ENCODE measurements at regions of chr15 and their contacts with region 1.

Region 1: DNA sequence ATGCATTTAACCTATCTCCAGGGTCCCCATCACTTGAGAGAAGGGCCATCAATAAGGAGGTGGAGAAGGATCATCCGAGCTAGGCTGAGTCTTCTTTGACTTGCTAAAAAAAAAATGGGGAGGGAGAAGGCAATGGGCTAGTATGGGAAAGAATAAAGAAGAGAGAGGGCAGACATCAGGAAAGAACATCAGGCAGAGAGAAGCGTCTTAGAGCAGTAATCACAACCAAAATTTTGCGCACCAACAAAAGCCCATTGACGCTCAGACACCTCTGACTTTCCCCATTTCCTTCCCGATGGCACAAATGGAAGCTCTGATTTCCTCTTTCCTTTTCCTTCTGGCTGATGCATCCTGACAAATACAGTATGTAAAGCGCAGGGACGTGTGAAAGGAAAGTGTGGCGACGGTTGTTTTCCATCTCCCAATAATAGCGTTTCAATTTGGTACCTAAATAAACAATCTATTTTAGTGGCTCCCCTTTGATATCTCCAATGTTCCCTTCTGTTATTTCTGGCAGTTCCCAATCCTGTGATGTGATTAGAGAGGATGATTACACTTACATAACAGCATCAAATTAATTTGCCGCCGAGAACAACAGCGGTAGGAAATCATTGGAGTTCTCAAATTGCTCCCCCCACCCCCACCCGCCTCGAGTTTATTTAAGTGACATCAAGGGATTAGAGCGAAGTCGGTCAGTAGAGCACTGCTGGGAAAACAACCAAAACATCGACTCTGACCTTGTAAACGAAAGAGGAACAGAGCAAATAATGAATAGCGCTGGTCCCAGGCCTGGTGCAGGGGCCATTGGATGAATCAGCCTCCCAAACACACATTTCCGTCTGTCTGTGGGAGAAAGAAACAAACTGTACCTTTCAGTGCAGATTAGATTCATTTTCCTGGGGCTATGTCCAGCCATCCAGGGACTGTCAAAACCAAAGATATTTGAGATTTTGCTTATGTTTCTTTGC is 273.3 kb upstream of the ICE2 start:
- DNase-seq: peak; percentile 77 to 93 (median 88)
- H3K4me3 ChIP-seq: peak overlapping the region in 2 of 4 donors; percentile 6 to 37
- H3K27ac ChIP-seq: peak overlapping the region; percentile 2 to 87 (median 77)
- H3K4me1 ChIP-seq: peaks cover 12 to 24% of the 10 kb centered on the region in 2 donors
- H3K27me3 ChIP-seq: no peaks in the 10 kb centered on the region
- CTCF ChIP-seq: no peak
- POLR2A ChIP-seq: peak in 1 of 2 donors; percentile 32

Region 2: DNA sequence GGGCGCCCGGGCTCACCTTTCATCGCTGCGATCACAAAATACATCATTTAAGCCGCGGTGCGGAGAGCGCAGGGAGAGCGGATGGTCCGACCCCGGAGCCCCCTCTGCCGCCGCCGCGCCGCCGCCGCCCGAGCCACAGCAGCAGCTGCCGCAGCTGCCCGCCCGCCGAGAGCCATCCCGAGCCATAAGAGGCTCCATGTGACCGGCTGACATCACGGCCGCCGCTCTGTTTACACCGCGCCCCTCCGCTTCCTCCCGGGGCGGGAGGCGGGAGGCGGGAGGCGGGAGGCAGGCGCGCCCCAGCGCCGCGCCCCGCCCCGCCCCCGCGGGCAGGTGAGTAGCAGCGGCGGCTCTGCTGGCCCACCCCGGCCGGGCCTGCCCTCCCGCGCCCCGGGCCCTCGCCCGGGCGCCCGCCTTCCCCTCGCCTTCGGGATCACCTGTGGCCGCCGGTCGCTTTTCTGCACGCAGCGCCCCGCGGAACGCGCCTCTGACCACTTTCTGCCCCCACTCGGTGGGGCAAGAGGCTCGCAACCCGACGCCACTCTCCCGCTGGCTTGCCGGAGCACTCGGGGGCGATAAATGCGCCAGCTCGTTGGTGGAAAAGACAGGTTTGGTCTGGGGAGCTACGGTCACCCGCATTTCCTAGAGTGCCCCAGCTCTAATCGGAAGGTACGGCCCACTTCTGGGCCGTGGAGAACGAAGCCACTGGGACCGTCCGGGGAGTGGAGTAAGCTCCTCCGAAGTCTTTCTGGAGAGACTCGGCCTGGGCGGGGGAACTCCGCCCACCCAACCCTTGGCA is 159.7 kb before region 1 on chr15:
- intact Hi-C with region 1: loop called in 1 of 2 experiments (anchors 10 kb)
- DNase-seq: peak; percentile 89 to 94 (median 92)
- H3K4me3 ChIP-seq: peak overlapping the region in 3 of 4 donors; percentile 67 to 99 (median 97)
- H3K27ac ChIP-seq: peak overlapping the region; percentile 85 to 99 (median 97)
- H3K4me1 ChIP-seq: peaks cover 15 to 23% of the 10 kb centered on the region in 2 donors
- H3K27me3 ChIP-seq: no peaks in the 10 kb centered on the region
- CTCF ChIP-seq: peak in 4 of 6 experiments; percentile 17 to 37 (median 24)
- POLR2A ChIP-seq: peak; percentile 87 to 96

Region 3: GRCh38 chr15:60649845-60650548 is 102.3 kb before region 1 on chr15:
- intact Hi-C with region 1: no loop called
- DNase-seq: no peak
- H3K4me3 ChIP-seq: no peak overlapping the region
- H3K27ac ChIP-seq: no peak overlapping the region
- H3K4me1 ChIP-seq: peaks cover 5 to 23% of the 10 kb centered on the region in 2 donors
- H3K27me3 ChIP-seq: no peaks in the 10 kb centered on the region
- CTCF ChIP-seq: no peak
- POLR2A ChIP-seq: no peak

Region 4: DNA sequence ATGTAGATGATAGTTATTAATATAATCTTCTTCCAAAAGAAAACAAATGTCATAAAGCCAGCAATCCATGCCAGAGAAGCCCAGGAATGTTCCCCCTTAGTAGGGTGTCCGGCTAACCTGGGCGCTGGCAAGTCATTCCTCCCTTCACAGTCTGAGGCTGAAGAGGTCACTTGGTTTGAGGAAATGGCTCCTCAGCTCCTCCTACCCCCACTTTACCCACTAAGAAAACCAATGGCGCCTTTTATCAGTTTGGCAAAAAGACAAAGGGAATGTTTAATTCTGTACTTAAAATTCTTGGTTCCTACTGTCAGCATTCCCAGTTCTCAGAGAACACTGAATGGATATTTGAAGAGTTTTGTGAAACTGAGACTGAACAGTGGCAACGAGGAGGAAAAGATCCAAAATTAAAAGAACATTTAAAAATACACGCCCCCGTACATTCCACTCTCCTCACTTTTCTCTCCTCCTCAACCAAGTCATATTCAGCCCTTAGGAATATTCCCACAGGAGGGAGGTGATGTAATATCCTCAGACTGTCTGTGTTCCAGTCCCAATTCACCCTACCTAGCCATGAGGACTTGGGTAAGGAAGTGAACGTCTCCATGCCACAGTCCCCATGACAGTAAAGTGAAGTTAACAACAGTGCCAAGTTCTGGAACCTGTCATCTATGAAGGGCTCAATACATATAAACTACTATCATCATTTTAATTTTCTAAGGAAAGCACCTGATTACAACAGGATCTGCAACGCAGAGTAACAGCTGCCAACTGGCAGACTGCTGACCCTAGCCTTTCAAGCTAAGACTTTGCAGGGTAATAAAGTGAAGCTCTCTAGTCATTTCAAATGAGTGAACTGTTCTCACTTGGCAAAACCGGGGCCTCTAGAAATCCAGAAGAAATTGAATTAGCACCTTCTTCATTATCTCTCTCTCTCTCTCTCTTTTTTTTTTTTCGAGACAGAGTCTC is 38.9 kb before region 1 on chr15:
- intact Hi-C with region 1: no loop called
- DNase-seq: no peak
- H3K4me3 ChIP-seq: no peak overlapping the region
- H3K27ac ChIP-seq: peak overlapping the region in 2 of 5 donors; percentile 40 to 62
- H3K4me1 ChIP-seq: peaks cover 5 to 13% of the 10 kb centered on the region in 2 donors
- H3K27me3 ChIP-seq: no peaks in the 10 kb centered on the region
- CTCF ChIP-seq: no peak
- POLR2A ChIP-seq: no peak

Region 5: DNA sequence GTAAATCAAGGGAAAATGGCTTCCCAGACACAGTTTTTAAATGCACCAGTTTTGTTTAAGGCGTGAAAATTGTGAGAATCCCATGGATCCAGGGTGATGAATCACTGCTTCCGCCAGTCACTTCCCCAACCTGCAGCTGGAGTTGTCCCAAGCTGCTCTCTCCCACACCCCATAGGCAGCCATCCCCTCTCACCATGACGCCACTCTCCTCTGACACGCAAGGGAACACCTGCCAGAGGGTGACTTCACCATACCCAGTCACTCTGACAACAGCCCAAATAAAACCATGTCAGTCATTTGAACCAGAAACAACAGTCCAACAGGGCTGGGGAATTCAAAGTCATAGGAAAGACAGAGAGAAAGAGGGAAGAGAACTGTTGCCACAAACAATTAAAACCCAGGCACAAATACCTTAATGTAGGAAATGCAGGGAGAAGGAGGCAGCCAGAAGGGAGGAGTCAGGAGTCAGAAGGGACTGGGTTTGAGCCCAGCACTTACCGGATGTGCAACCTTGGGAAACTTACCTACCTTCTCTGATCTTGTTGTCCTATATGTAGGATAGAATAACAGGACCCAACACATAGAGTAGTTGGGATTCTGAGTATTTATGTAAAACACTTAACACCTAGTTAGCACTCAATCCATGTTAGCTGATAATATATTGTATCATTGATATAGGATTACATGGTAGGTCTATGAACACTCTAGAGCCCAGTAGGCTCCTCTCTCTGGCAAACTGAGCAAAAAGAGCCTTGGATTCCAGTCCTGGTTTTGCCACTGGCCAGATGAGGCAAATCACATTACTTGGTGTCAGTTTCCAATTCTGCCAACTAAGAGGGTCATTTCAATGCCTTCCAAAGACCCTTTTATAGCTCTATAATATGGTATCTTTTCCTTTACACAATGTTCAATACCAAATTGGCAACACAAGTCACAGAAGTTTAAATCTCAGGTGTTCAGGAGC is 53.0 kb after region 1 on chr15:
- intact Hi-C with region 1: no loop called
- DNase-seq: peak in 1 of 7 donors; percentile 30
- H3K4me3 ChIP-seq: no peak overlapping the region
- H3K27ac ChIP-seq: no peak overlapping the region
- H3K4me1 ChIP-seq: peaks cover 0 to 9% of the 10 kb centered on the region in 2 donors
- H3K27me3 ChIP-seq: no peaks in the 10 kb centered on the region
- CTCF ChIP-seq: no peak
- POLR2A ChIP-seq: no peak

Region 6: GRCh38 chr15:61974759-61975158 is 1222.5 kb after region 1 on chr15:
- intact Hi-C with region 1: no loop called
- DNase-seq: no peak
- H3K4me3 ChIP-seq: no peak overlapping the region
- H3K27ac ChIP-seq: no peak overlapping the region
- H3K4me1 ChIP-seq: peaks cover 0 to 12% of the 10 kb centered on the region in 2 donors
- H3K27me3 ChIP-seq: no peaks in the 10 kb centered on the region
- CTCF ChIP-seq: no peak
- POLR2A ChIP-seq: no peak

Measured in adrenal gland (tissue), 19 donors.